Activated CD4-positive, alpha-beta T cell treated with anti-CD3 and anti-CD28 coated beads for 36 hours (primary cell): ENCODE measurements at regions of chr1 and their contacts with region 1.

Region 1: GRCh38 chr1:186605762-186606350 is 74.4 kb downstream of the PTGS2 start:
- DNase-seq: peak; percentile 47
- ATAC-seq: peak; percentile 42
- H3K4me3 Mint-ChIP-seq: no peak overlapping the region
- H3K27ac Mint-ChIP-seq: no peak overlapping the region
- H3K4me1 Mint-ChIP-seq: peaks cover 4% of the 10 kb centered on the region
- H3K27me3 Mint-ChIP-seq: peaks cover 21% of the 10 kb centered on the region

Region 2: GRCh38 chr1:186112280-186112679 is 493.6 kb before region 1 on chr1:
- CTCF ChIA-PET with region 1: no interaction called
- POLR2A ChIA-PET with region 1: no interaction called
- intact Hi-C with region 1: no loop called
- DNase-seq: no peak
- ATAC-seq: no peak
- H3K4me3 Mint-ChIP-seq: no peak overlapping the region
- H3K27ac Mint-ChIP-seq: no peak overlapping the region
- H3K4me1 Mint-ChIP-seq: no peaks in the 10 kb centered on the region
- H3K27me3 Mint-ChIP-seq: peaks cover 2% of the 10 kb centered on the region

Region 3: GRCh38 chr1:186680245-186681061 is 74.6 kb after region 1 on chr1 and contains the start of gene PTGS2:
- CTCF ChIA-PET with region 1: no interaction called
- POLR2A ChIA-PET with region 1: no interaction called
- intact Hi-C with region 1: loop called in 1 of 2 experiments (anchors 2 kb)
- DNase-seq: peak; percentile 72
- ATAC-seq: peak; percentile 96
- H3K4me3 Mint-ChIP-seq: peak within 1 kb of the TSS; percentile 73
- H3K27ac Mint-ChIP-seq: peak within 1 kb of the TSS; percentile 43
- H3K4me1 Mint-ChIP-seq: peaks cover 10% of the 10 kb centered on the region
- H3K27me3 Mint-ChIP-seq: peaks cover 43% of the 10 kb centered on the region
- total RNA-seq, gene PTGS2: 1.1 to 1.2 TPM